ENCODE measurements at regions of chr11 and their contacts with region 1.

Region 1: GRCh38 chr11:116931206-116931953 is 94.0 kb upstream of the APOA1 start:
- DNase-seq: peak; percentile 32 to 70
- H3K4me3 ChIP-seq: no peak overlapping the region
- H3K27ac ChIP-seq: no peak overlapping the region
- H3K4me1 ChIP-seq: peaks cover 13% of the 10 kb centered on the region
- H3K27me3 ChIP-seq: no peaks in the 10 kb centered on the region
- CTCF ChIP-seq: no peak

Region 2: DNA sequence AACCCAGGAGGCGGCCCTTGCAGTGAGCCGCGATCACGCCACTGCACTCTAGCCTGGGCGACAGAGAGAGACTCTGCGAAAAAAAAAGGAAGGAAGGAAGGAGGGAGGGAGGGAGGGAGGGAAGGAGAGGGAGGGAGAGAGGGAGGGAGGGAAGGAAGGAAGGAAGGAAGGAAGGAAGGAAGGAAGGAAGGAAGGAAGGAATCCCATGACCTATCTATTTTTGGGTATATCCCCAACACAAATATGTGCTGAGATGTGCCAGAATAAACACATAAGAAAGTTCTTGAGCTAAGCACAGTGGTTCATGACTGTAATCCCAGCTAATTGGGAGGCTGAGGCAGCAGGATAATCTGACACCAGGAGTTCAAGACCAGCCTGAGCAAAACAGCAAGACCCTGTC is 84.9 kb after region 1 on chr11:
- CTCF ChIA-PET with region 1: interaction called, 16 read pairs
- POLR2A ChIA-PET with region 1: no interaction called
- intact Hi-C with region 1: no loop called
- DNase-seq: no peak
- H3K4me3 ChIP-seq: no peak overlapping the region
- H3K27ac ChIP-seq: no peak overlapping the region
- H3K4me1 ChIP-seq: peaks cover 21% of the 10 kb centered on the region
- H3K27me3 ChIP-seq: no peaks in the 10 kb centered on the region
- CTCF ChIP-seq: no peak

Measured in PC-9 (cell line).